GM13977 (cell line): ENCODE measurements at regions of chr2 and their contacts with region 1.

Region 1: GRCh38 chr2:147989809-147990403 is 30.6 kb downstream of the ORC4 start:
- DNase-seq: peak; percentile 55
- CTCF ChIP-seq: peak; percentile 73

Region 2: GRCh38 chr2:147588134-147588533 is 401.8 kb before region 1 on chr2:
- in situ Hi-C with region 1: no loop called
- DNase-seq: no peak
- CTCF ChIP-seq: no peak

Region 3: GRCh38 chr2:147845411-147845971 is 144.4 kb before region 1 on chr2:
- in situ Hi-C with region 1: no loop called
- DNase-seq: peak; percentile 69
- CTCF ChIP-seq: no peak

Region 4: DNA sequence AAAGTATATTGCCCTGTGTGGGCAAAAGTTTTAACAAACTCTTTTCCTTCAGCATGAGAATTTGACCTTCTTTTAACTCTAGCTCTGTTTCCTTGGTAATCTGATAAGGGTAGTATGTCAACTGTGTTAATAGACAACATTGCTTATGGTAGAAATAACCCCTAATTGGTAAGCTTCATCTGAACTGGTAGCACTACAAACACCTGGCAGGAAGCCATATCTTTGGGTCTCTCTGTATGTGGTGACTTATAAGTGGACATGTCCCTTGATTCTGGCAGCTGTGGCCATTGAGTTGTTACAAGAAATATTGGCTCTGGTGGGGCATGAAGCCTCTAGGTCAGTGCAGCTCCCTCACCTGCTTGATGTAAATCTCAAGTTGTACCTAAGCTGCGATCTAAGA is 77.9 kb after region 1 on chr2:
- in situ Hi-C with region 1: no loop called
- DNase-seq: no peak
- CTCF ChIP-seq: no peak

Region 5: GRCh38 chr2:148122788-148123187 is 132.9 kb after region 1 on chr2:
- in situ Hi-C with region 1: no loop called
- DNase-seq: no peak
- CTCF ChIP-seq: no peak

Region 6: DNA sequence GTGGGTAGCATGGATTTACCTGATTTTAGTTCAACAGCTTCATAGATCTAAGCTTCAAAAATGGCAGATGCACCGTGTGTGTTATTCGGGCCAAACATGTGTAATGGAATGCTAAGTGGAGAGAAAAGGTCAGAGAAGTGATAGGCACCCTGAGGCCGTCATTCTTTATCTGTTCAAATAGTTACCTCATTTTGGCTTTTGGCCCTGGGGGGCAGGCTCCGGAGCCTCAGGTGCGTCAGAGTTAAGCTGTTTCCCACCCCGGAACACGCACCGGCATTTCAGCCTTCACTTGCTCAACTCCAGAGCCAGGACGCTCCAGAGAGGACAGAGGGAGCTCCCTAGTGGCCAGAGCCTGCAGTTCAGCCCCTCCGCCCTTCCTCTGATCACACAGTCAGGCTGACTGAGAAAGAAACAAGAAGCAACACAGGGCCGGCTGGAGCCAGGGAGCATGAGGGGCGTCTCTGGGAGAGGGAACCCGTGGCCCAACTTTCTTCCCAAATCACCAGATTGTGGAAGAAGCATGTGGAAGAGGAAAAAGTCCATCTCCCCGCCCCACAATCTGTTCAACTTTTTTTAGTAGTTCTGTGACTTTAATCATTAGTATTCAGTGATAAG is 519.5 kb after region 1 on chr2:
- in situ Hi-C with region 1: loop called (anchors 5 kb)
- DNase-seq: peak; percentile 78
- CTCF ChIP-seq: peak; percentile 98

Region 7: GRCh38 chr2:148989882-148990493 is 1000.1 kb after region 1 on chr2:
- in situ Hi-C with region 1: loop called (anchors 25 kb)
- DNase-seq: peak; percentile 78
- CTCF ChIP-seq: peak; percentile 69